HepG2 (cell line): ENCODE measurements at regions of chr15 and their contacts with region 1.

Region 1: DNA sequence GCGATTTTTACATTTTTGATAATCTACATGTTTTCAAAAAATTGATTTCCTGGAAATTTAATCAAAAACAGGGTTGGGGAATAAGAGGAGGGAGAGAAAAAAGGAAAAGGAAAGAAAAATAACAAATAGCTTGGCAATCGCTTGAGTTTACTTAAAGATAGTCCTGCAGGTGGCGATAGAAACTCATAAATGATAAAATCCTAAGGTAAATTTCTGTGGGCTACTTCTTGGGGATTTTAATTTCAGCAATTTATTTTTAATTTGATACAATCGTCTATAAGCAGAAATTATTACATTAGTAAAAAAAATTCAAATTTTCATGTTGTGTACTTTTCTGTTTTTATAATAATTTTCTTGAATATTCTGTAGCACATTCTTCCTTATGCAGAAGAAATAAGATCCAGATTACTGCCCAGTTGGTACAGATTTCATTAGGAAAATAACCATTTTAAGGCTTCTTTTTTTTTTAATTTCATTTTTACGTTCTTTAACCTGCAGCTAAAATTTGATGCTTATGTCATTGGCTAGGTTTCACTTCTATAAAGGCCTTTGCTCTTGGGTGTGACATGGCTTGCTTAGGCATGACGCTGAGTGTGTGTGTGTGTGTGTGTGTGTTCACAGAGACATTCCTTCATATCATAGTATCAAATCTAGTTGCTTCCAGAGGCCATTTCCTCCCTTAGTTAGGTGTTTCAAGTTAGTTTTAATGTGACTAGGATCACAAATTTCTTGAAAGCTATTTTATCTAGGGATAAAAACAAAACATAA is 181.8 kb downstream of the MCTP2 start:
- DNase-seq: peak; percentile 22
- ATAC-seq: no peak
- H3K4me3 ChIP-seq: no peak overlapping the region
- H3K27ac ChIP-seq: no peak overlapping the region
- H3K4me1 ChIP-seq: no peaks in the 10 kb centered on the region
- H3K27me3 ChIP-seq: no peaks in the 10 kb centered on the region
- CTCF ChIP-seq: peak; percentile 31; the same call in 1 of the 2 replicates
- EP300 ChIP-seq: no peak
- POLR2A ChIP-seq: no peak
- RAD21 ChIP-seq: no peak

Region 2: GRCh38 chr15:94441760-94442159 is 28.6 kb after region 1 on chr15:
- CTCF ChIA-PET with region 1: no interaction called
- POLR2A ChIA-PET with region 1: no interaction called
- in situ Hi-C with region 1: no loop called
- intact Hi-C with region 1: no loop called
- DNase-seq: no peak
- ATAC-seq: no peak
- H3K4me3 ChIP-seq: no peak overlapping the region
- H3K27ac ChIP-seq: no peak overlapping the region
- H3K4me1 ChIP-seq: no peaks in the 10 kb centered on the region
- H3K27me3 ChIP-seq: no peaks in the 10 kb centered on the region
- CTCF ChIP-seq: no peak
- EP300 ChIP-seq: no peak
- POLR2A ChIP-seq: no peak
- RAD21 ChIP-seq: no peak

Region 3: GRCh38 chr15:94467034-94467433 is 53.9 kb after region 1 on chr15:
- CTCF ChIA-PET with region 1: no interaction called
- POLR2A ChIA-PET with region 1: no interaction called
- in situ Hi-C with region 1: no loop called
- intact Hi-C with region 1: loop called (anchors 1 kb)
- DNase-seq: peak; percentile 61
- ATAC-seq: peak; percentile 68
- H3K4me3 ChIP-seq: no peak overlapping the region; a peak in 1 of 6 replicates
- H3K27ac ChIP-seq: no peak overlapping the region
- H3K4me1 ChIP-seq: no peaks in the 10 kb centered on the region
- H3K27me3 ChIP-seq: no peaks in the 10 kb centered on the region
- CTCF ChIP-seq: peak; percentile 29; the same call in 1 of the 2 replicates
- EP300 ChIP-seq: no peak
- POLR2A ChIP-seq: no peak
- RAD21 ChIP-seq: no peak

Region 4: GRCh38 chr15:94485148-94485719 is 72.1 kb after region 1 on chr15:
- CTCF ChIA-PET with region 1: no interaction called
- POLR2A ChIA-PET with region 1: no interaction called
- in situ Hi-C with region 1: no loop called
- intact Hi-C with region 1: no loop called
- DNase-seq: no peak
- ATAC-seq: no peak
- H3K4me3 ChIP-seq: no peak overlapping the region
- H3K27ac ChIP-seq: no peak overlapping the region
- H3K4me1 ChIP-seq: no peaks in the 10 kb centered on the region
- H3K27me3 ChIP-seq: no peaks in the 10 kb centered on the region
- CTCF ChIP-seq: no peak
- EP300 ChIP-seq: no peak
- POLR2A ChIP-seq: no peak
- RAD21 ChIP-seq: no peak

Region 5: GRCh38 chr15:94576889-94577533 is 163.8 kb after region 1 on chr15:
- CTCF ChIA-PET with region 1: no interaction called
- POLR2A ChIA-PET with region 1: no interaction called
- in situ Hi-C with region 1: no loop called
- intact Hi-C with region 1: loop called (anchors 2 kb)
- DNase-seq: peak; percentile 20
- ATAC-seq: peak; percentile 71
- H3K4me3 ChIP-seq: no peak overlapping the region
- H3K27ac ChIP-seq: no peak overlapping the region
- H3K4me1 ChIP-seq: no peaks in the 10 kb centered on the region
- H3K27me3 ChIP-seq: no peaks in the 10 kb centered on the region
- CTCF ChIP-seq: peak; percentile 53
- EP300 ChIP-seq: no peak
- POLR2A ChIP-seq: no peak
- RAD21 ChIP-seq: no peak